ENCODE measurements at regions of chr10 and their contacts with region 1.

Region 1: GRCh38 chr10:110893559-110894179 is 21.9 kb downstream of the PDCD4 start:
- DNase-seq: no peak
- ATAC-seq: peak in 1 of 2 donors; percentile 85
- H3K4me3 ChIP-seq: no peak overlapping the region
- H3K27ac ChIP-seq: no peak overlapping the region
- H3K4me1 ChIP-seq: no peaks in the 10 kb centered on the region
- H3K27me3 ChIP-seq: no peaks in the 10 kb centered on the region
- CTCF ChIP-seq: peak; percentile 53 to 66 (median 59)
- POLR2A ChIP-seq: no peak

Region 2: DNA sequence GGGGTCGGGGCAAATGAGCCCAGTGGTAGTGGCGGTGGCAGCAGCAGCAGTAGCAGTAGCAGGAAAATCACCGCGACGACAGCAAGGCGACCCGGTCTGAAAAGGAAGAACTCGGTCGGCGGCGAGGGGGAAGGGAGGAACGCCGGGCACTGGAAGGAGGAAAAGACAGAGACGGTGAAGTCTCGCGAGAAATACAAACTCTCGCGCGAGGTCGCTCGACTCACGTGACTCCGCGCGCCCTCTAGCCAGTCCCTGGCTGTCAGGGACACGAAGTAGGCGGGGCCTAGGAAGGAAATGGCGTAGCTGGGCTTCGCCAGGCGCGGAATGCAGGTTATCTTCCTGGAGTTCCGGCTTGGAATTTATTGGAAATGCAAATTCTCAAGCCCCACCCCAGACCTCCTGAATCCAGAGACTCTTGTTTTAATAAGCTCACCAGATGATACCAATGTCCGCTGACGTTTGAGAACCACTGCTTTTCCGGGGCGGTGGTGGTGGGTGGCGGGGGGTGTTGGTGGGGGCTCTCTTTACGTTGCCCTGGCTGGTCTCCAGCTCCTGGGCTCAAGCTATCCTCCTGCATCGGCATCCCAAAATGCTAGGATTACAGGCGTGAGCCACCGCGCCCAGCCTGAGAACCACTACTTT is 588.8 kb before region 1 on chr10 and contains the start of gene SMNDC1:
- in situ Hi-C with region 1: loop called in 1 of 4 experiments (anchors 25 kb)
- intact Hi-C with region 1: no loop called
- DNase-seq: peak; percentile 94 to 97
- ATAC-seq: peak; percentile 93 to 96
- H3K4me3 ChIP-seq: peak within 1 kb of the TSS; percentile 74 to 88 (median 86)
- H3K27ac ChIP-seq: peak within 1 kb of the TSS; percentile 91 to 95 (median 94)
- H3K4me1 ChIP-seq: peaks cover 42 to 45% of the 10 kb centered on the region in 2 donors
- H3K27me3 ChIP-seq: no peaks in the 10 kb centered on the region
- CTCF ChIP-seq: no peak
- POLR2A ChIP-seq: peak; percentile 68 to 69
- total RNA-seq, gene SMNDC1: 7.3 to 23.9 (median 10.0) TPM

Region 3: DNA sequence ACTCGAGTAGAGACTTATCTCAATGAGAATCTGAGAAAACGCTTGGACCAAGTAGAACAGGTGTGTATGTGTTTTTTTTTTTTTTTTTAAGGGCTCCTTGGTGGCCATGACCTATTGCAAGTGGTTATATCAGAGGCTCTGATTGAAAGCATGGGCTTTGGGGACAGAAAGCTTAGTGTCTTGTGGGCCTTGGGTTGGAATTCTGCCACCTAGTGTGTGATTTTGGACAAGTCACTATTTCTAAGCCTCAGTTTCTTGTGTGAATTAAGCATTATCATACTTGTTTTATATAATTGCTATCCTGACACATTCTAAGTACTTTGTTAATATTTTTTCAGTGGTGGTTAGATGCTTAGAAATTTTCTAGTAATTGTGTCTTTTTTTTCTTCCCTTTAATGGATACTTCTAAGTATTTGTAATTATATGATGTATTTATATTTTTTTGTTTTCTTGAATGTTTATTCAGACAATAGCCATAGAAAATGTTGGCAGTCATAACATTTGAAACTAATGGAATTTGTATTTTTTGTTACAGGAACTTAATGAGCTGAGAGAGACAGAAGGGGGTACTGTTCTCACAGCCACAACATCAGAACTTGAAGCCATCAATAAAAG is 293.1 kb before region 1 on chr10:
- in situ Hi-C with region 1: loop called (anchors 10 to 25 kb)
- intact Hi-C with region 1: no loop called
- DNase-seq: no peak
- ATAC-seq: no peak
- H3K4me3 ChIP-seq: no peak overlapping the region
- H3K27ac ChIP-seq: no peak overlapping the region
- H3K4me1 ChIP-seq: no peaks in the 10 kb centered on the region
- H3K27me3 ChIP-seq: no peaks in the 10 kb centered on the region
- CTCF ChIP-seq: no peak
- POLR2A ChIP-seq: no peak

Region 4: DNA sequence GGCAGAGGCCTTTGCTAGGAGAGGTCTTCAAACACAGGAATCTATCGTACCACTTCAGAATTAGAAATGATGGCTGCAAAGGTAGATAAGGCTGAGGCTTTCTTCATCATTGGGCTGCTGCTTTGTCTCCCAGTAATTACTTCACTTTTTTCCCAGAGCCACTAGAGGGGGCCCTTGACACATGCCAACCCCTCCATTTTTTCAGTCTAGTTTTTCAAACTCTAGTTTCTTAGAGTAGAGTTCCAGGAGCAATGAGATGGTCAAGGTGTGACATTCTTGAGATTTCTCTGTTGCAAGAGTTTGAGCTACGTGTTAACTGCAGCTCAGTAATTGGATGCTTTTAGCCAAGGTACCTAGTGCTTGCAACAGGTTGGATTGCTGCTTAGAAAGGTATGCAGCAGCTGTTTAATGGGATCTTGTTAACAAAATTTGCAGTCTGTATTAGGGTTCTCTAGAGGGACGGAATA is 283.3 kb before region 1 on chr10:
- in situ Hi-C with region 1: loop called (anchors 10 to 25 kb)
- intact Hi-C with region 1: no loop called
- DNase-seq: peak; percentile 27 to 45
- ATAC-seq: peak; percentile 78 to 79
- H3K4me3 ChIP-seq: no peak overlapping the region
- H3K27ac ChIP-seq: peak overlapping the region; percentile 64 to 77 (median 72)
- H3K4me1 ChIP-seq: peaks cover 10 to 14% of the 10 kb centered on the region in 2 donors
- H3K27me3 ChIP-seq: no peaks in the 10 kb centered on the region
- CTCF ChIP-seq: peak; percentile 67 to 88 (median 81)
- POLR2A ChIP-seq: no peak

Region 5: DNA sequence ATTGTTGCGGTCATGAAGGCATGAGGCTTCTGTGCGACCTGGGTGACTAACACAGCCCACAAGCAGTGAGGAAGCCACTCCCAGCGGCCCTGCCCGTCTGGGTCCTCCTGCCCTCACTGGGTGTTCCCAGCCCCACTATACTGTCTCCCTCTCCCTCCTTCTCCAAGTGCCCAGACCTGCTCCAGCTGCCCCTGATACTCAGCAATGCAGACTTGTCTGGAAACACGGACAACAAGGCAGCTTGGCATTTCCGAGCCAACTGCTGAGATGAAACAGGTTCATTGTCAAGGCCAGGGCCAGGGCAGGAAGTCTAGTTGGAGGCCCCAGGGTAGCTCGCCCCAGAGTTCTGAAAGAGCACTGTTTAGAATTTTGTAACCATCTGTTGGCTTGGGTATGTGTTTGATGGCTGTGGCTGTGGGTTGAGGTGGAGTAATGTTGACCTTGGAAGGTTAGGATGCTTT is 153.8 kb before region 1 on chr10:
- in situ Hi-C with region 1: loop called in 2 of 4 experiments (anchors 5 to 10 kb)
- intact Hi-C with region 1: loop called (anchors 2 kb)
- DNase-seq: no peak
- ATAC-seq: no peak
- H3K4me3 ChIP-seq: no peak overlapping the region
- H3K27ac ChIP-seq: no peak overlapping the region
- H3K4me1 ChIP-seq: peaks cover 0 to 3% of the 10 kb centered on the region in 2 donors
- H3K27me3 ChIP-seq: no peaks in the 10 kb centered on the region
- CTCF ChIP-seq: no peak
- POLR2A ChIP-seq: no peak

Region 6: GRCh38 chr10:110803830-110804338 is 89.8 kb before region 1 on chr10:
- in situ Hi-C with region 1: loop called in 2 of 4 experiments (anchors 5 to 10 kb)
- intact Hi-C with region 1: loop called (anchors 1 kb)
- DNase-seq: no peak
- ATAC-seq: peak; percentile 41 to 54
- H3K4me3 ChIP-seq: no peak overlapping the region
- H3K27ac ChIP-seq: no peak overlapping the region
- H3K4me1 ChIP-seq: peaks cover 3 to 9% of the 10 kb centered on the region in 2 donors
- H3K27me3 ChIP-seq: no peaks in the 10 kb centered on the region
- CTCF ChIP-seq: peak; percentile 36 to 60 (median 49)
- POLR2A ChIP-seq: no peak

Region 7: DNA sequence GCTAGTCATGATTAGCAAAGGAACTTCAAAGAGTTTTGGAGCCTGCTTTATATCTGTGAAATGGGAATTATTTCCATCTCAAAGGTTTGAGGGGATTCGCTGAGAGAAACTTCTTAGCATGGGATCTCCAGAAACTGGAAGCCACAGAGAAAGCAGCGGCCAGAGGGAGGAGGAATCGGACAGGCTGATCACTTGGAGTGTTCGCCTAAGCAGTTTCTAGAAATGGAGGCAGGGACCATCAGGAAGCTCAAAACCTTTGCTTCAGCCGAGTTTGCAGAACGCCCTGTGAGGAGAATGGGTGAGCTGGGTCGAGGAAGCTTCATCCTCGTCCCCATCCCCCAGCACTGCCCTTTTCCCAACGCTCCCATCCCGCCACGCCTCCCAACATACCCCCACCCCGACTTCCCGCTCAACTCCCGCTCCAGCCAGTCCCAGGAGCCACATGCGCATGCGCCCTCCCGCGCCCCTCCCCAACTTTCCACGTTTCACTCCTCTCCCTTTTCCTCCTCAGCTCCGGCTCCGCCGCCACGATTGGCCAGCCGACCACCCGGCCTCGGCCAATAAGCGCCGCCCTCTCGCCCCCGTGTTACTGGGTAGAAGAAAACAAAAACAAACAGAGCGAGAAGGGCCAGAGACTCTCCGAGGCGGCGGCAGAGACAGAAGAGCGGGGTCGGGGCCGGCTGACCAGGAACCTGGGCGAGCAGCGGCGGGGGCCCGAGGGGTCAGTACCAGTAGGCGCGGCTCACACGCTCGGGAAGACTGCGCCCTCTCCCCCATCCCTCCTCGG is 22.2 kb before region 1 on chr10 and contains the start of gene PDCD4:
- in situ Hi-C with region 1: no loop called
- intact Hi-C with region 1: loop called (anchors 2 kb)
- DNase-seq: peak; percentile 98 to 99
- ATAC-seq: peak; percentile 93 to 96
- H3K4me3 ChIP-seq: peak within 1 kb of the TSS; percentile 71 to 100 (median 88)
- H3K27ac ChIP-seq: peak within 1 kb of the TSS; percentile 85 to 96 (median 96)
- H3K4me1 ChIP-seq: peaks cover 9 to 20% of the 10 kb centered on the region in 2 donors
- H3K27me3 ChIP-seq: no peaks in the 10 kb centered on the region
- CTCF ChIP-seq: no peak
- POLR2A ChIP-seq: peak; percentile 77 to 95
- total RNA-seq, gene PDCD4: 6.4 to 15.6 (median 9.8) TPM

Measured in gastrocnemius medialis (tissue), 4 donors.